ENCODE measurements at regions of chr10 and their contacts with region 1.

Region 1: DNA sequence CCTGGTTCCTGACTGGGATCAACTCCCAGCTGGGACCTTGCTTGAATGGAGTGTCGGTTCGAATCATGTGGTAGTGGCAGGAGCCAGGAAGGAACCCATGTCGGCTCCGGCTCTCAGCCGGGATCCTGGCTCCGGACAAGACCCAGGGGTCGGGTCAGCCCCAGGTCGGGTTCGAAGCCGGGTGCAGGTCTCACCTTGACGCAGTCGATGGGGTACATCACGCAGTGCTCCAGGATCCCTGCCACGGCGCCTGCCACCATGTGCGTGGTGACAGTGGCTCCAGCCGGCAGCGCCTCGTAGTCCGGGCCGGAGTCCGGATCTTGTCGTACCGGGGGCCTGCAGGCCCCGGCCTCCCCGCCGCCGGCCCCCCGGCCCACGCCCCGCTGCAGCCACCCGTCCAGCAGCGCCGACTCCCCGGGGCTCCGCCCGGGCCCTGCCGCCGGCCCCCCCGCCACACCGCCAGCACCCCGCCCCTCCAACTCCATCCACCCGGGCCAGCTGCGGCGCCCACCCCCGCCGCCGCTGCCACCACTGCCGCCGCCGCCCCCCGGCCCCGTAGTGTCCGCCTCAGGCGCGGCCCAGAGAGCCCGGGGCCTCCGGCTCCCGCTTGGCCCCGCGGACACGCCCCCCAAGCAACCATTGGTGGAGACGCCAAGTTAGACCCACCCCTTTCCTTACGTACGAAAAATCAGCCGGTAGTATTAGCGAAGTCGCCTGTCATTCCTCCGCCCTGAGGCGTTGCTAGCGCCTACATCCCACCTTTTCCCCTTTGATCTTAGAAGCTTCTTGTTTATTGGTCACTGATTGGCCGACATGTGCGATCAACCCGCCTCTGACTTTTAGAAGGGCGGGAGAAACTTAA is at the start of gene SLC25A28:
- DNase-seq: peak; percentile 94 to 97 (median 96)
- ATAC-seq: peak; percentile 0
- H3K4me3 ChIP-seq: peak within 1 kb of the TSS; percentile 71
- H3K4me1 ChIP-seq: peaks cover 7% of the 10 kb centered on the region
- CTCF ChIP-seq: peak; percentile 13
- total RNA-seq, gene SLC25A28: 38.2 to 64.4 (median 39.6) TPM

Region 2: DNA sequence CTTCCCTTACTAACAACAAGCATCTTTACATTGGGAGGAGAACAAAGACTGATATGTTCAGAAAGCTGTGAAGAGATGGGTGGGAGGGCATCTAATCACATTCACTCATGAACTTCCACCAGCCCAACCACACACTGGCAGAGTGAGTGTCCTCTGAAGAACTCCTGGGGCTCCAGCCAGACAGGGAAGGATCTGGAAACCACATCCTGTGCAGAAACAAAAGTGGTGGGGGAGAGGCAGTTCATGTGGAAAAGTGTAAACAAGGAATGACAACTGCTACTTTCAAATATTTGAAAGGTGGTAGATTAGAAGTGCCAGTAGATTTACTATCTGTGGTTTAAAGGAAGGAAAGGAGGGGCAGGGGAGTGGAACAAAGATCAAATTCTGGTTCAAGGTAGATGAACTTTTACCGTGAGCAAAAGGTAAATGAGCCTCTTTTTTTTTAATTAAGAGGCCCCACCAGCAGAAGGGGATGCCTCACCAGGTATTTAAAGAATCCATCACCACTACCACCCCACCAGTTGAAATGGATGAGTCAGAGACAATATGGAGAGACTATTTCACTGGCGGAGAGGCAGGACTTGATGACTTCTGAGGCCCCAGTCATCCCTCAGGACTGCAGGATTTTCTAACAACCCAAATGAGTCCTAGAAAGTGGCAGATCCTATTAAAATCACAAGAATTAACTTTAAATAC is 224.2 kb before region 1 on chr10:
- intact Hi-C with region 1: loop called in 1 of 2 experiments (anchors 10 kb)
- DNase-seq: no peak
- ATAC-seq: no peak
- H3K4me3 ChIP-seq: no peak overlapping the region
- H3K4me1 ChIP-seq: no peaks in the 10 kb centered on the region
- CTCF ChIP-seq: no peak

Region 3: GRCh38 chr10:99484603-99485581 is 135.2 kb before region 1 on chr10:
- intact Hi-C with region 1: no loop called
- DNase-seq: peak in 1 of 3 donors; percentile 23
- ATAC-seq: no peak
- H3K4me3 ChIP-seq: no peak overlapping the region
- H3K4me1 ChIP-seq: no peaks in the 10 kb centered on the region
- CTCF ChIP-seq: no peak

Region 4: GRCh38 chr10:99573790-99574189 is 46.3 kb before region 1 on chr10:
- intact Hi-C with region 1: no loop called
- DNase-seq: no peak
- ATAC-seq: no peak
- H3K4me3 ChIP-seq: no peak overlapping the region
- H3K4me1 ChIP-seq: no peaks in the 10 kb centered on the region
- CTCF ChIP-seq: no peak

Region 5: DNA sequence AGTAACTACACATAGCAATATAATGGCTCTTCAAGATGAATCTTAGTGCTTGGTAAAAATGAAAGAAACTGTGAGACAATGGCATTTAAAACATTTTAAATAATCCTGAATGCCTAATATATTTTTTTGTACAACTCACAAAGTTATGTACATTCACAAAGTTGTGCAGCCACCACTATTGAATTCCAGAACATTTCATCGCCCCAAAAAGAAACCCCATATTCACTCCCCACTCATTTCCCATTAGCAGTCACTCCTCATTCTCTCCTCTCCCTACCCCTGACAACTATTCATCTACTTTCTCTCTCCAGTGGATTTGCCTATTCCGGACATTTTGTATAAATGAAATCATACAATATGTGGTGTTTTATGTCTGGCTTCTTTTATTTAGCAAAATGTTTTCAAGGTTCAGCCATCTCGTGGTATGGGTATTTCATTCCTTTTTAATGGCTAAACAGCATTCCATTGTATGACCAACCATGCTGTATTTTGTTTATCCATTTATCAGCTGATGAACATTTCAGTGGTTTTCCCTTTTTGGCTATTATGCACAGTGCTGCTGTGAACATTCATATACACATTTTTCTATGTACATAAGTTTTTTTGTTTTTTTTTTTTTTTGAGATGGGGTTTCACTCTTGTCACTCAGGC is 74.0 kb after region 1 on chr10:
- intact Hi-C with region 1: no loop called
- DNase-seq: no peak
- ATAC-seq: no peak
- H3K4me3 ChIP-seq: no peak overlapping the region
- H3K4me1 ChIP-seq: no peaks in the 10 kb centered on the region
- CTCF ChIP-seq: no peak

Measured in mucosa of descending colon (tissue), 3 donors.